AG04450 (cell line): ENCODE measurements at regions of chr18 and their contacts with region 1.

Region 1: GRCh38 chr18:22930089-22930713 is 2.9 kb upstream of the RBBP8 start:
- DNase-seq: peak; percentile 21
- H3K4me3 ChIP-seq: no peak overlapping the region
- H3K27ac ChIP-seq: no peak overlapping the region
- H3K27me3 ChIP-seq: no peaks in the 10 kb centered on the region
- CTCF ChIP-seq: peak; percentile 90

Region 2: DNA sequence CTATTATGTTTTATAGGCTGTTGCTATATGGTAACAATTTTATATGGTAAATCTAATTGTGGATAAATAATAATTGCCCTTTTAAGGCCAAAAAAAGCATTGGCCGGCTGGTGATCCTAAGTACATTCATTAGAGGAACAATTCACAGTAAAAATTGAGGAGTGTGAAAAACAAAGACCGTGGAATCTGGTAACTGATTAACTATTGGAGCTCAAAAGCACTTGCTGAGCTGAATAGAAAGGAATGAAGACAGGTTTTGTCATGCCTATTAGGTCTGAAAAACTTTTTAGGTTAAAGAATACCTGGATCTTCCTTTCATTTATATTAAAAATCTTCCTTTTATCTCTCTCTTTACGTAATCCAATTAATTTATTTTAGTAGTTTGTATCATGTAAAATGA is 15.6 kb before region 1 on chr18:
- CTCF ChIA-PET with region 1: interaction called, 14 read pairs
- POLR2A ChIA-PET with region 1: no interaction called
- DNase-seq: no peak
- H3K4me3 ChIP-seq: no peak overlapping the region
- H3K27ac ChIP-seq: no peak overlapping the region
- H3K27me3 ChIP-seq: no peaks in the 10 kb centered on the region
- CTCF ChIP-seq: no peak

Region 3: GRCh38 chr18:22977847-22978701 is 47.9 kb after region 1 on chr18:
- CTCF ChIA-PET with region 1: interaction called, 26 read pairs
- POLR2A ChIA-PET with region 1: no interaction called
- DNase-seq: peak; percentile 27
- H3K4me3 ChIP-seq: no peak overlapping the region
- H3K27ac ChIP-seq: no peak overlapping the region
- H3K27me3 ChIP-seq: no peaks in the 10 kb centered on the region
- CTCF ChIP-seq: no peak

Region 4: GRCh38 chr18:22983175-22983574 is 53.0 kb after region 1 on chr18:
- CTCF ChIA-PET with region 1: interaction called, 26 read pairs
- POLR2A ChIA-PET with region 1: no interaction called
- DNase-seq: peak; percentile 8
- H3K4me3 ChIP-seq: no peak overlapping the region
- H3K27ac ChIP-seq: no peak overlapping the region
- H3K27me3 ChIP-seq: no peaks in the 10 kb centered on the region
- CTCF ChIP-seq: peak; percentile 62